AG04449 (cell line): ENCODE measurements at regions of chr7 and their contacts with region 1.

Region 1: GRCh38 chr7:25894902-25895791 is 256.9 kb upstream of the NFE2L3 start:
- DNase-seq: no peak
- H3K4me3 ChIP-seq: peak overlapping the region; percentile 13; the same call in 1 of the 2 replicates
- CTCF ChIP-seq: peak; percentile 74

Region 2: DNA sequence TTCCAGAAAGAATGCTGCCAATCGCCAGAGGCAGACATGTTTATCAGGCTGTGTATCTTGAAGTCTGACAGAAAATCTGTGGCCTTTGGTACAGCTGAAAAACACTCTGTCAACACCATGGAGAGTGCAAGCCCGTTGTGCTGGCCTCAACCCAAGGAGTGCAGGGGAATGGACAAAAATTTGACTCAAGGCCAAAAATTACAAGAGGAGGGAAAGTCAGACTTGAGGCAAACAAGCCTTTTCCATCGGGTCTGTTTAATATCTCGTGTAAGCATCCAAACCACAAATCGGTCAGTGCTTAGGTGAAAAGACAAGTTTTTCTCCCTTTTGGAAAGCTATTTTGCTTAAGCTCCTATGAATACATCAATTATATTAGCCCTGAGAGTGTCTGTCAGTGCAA is 48.4 kb before region 1 on chr7:
- CTCF ChIA-PET with region 1: no interaction called
- POLR2A ChIA-PET with region 1: no interaction called
- DNase-seq: peak; percentile 87
- H3K4me3 ChIP-seq: no peak overlapping the region
- CTCF ChIP-seq: no peak

Region 3: DNA sequence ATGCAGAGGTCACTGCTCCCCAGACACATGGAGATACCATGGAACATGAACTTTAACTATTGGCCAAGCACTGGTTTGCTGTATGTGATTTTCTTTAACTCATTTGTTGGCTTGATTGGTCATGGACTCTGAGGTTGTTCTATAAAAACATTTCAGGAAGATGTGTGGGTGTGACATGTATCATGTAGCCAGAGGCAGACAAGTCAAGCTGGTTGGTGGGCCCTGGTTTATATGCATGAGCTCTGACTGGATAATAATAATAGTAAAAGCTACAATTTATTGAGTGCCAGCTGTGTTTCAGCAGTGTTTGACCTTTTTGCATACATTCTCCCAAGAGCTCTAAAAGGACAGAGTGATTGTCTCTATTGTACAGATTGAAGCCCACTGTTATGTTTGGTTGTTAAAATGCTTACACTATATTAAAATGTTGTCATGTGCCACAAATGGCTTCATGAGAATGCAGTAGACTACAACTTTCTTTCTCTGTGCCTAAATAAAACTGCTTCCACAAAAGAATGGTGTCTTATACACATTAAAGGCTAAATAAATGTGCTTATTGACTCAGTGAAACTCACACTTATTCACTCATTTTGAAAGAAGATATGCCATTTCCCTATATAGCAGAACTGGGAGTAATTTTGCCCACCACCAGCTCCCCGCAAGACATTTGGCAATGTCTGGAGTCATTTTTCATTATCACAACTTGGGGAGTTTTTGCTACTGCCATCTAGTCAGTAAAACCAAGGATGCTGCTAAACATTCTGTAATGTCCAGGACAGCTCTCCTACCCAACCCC is 13.2 kb after region 1 on chr7:
- CTCF ChIA-PET with region 1: interaction called, 14 read pairs
- POLR2A ChIA-PET with region 1: no interaction called
- DNase-seq: no peak
- H3K4me3 ChIP-seq: no peak overlapping the region
- CTCF ChIP-seq: no peak

Region 4: GRCh38 chr7:26090927-26091519 is 195.9 kb after region 1 on chr7:
- CTCF ChIA-PET with region 1: interaction called, 52 read pairs
- POLR2A ChIA-PET with region 1: no interaction called
- DNase-seq: peak; percentile 26
- H3K4me3 ChIP-seq: no peak overlapping the region
- CTCF ChIP-seq: peak; percentile 57

Region 5: DNA sequence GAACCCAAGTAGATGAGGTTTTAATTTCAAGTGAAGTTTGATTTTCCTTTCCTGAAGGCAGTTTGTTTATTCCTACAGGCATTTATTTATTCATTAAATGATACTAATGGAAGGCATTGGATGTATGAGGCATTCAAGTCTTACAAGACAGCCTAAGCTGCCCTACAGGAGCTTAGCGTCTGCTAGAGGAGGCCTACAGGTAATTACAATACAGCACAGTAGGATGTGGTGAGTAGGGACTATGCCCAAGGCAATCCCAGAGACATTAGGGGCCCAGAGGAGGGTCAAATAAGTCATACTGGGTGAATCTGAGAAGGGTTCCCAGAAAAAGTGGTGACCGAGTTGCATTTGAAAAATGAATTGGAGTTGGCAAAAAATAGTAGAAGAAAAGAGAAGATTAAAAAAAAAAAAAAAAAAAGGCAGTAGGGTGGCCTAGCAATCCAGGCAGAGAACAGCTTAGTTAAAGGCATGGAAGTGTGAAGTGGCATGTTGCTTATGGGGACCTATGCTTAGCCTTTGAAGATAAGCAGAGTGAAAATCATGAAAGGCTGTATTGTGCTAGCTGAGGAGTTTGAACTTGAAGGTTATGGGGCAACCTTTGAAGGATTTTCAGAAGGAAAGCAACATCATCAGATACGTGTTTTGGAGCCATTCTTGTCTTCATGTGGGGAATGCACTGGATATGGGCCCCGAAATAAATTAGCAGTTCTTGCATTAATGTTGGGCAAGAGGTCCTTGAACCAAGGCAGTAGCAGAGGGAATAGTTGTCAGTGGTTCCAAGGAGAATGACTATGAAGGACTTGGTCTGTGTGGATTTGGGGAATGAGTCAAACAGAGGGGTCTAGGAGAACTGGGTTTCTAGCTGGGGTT is 462.0 kb after region 1 on chr7:
- CTCF ChIA-PET with region 1: interaction called, 329 read pairs
- POLR2A ChIA-PET with region 1: no interaction called
- DNase-seq: no peak
- H3K4me3 ChIP-seq: no peak overlapping the region
- CTCF ChIP-seq: no peak

Region 6: GRCh38 chr7:26538689-26539088 is 643.5 kb after region 1 on chr7:
- CTCF ChIA-PET with region 1: no interaction called
- POLR2A ChIA-PET with region 1: no interaction called
- DNase-seq: no peak
- H3K4me3 ChIP-seq: no peak overlapping the region
- CTCF ChIP-seq: no peak

Region 7: DNA sequence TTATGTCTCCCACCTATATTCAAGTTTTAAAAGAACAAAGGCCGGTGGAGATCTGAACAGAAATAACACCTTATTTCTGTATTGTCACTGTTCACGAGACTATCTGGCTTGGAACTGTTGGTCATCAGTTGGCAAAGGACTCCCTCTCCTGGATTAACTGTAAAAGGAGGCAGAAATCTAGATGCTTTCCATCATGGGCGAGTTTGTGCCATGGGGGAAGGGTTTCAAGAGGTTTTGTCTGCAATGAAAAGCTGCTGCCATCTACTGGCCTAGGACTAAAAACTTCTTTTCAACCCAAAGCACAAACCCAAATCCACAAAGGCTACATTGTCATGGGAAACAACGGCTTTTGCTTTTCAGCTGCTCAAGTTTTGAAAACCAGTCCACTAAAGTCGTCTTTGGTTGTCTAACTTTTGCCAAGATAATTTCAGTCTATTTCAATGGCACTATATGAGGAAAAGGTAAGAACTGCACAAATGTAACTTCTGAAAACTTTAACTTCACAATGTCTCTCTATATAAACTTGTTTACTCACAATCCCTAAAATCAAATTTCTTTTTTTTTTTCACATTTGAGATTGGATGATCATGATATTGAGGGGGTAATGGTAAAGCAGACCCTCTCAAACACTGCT is 772.5 kb after region 1 on chr7:
- CTCF ChIA-PET with region 1: interaction called, 23 read pairs
- POLR2A ChIA-PET with region 1: no interaction called
- DNase-seq: peak; percentile 59
- H3K4me3 ChIP-seq: no peak overlapping the region
- CTCF ChIP-seq: peak; percentile 78